GM10248 (cell line): ENCODE measurements at regions of chr4 and their contacts with region 1.

Region 1: DNA sequence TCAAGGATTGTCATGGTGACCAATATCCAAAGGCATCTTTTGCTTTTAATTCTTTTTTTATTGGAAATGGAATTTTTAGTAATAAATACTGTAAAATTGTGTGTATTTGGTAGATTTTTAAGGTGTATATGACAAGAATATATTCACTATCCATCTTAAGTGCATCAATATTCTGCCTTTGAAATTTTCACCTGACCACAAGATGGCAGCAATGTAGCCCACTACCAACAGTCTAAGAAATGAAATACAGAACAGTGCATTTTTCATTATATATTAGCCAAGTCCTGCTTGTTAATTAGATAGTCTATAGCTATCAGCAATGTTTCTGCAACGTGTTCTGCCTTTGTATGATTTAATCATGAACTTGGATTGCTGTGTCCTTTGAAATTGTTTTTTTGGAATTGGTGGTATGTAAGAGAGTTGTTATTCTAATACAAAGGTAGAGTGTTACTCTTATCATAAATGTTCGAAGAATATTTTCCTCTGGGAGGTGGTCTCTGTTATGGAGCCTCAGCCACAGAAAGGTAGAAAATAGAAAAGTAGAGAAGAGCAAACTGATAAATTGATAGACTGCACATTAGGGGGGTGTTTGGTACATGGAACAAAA is 38.2 kb downstream of the HPGDS start:
- DNase-seq: peak; percentile 15
- CTCF ChIP-seq: peak; percentile 70

Region 2: GRCh38 chr4:94160774-94161173 is 143.7 kb before region 1 on chr4:
- CTCF ChIA-PET with region 1: no interaction called
- POLR2A ChIA-PET with region 1: no interaction called
- DNase-seq: no peak
- CTCF ChIP-seq: no peak

Region 3: DNA sequence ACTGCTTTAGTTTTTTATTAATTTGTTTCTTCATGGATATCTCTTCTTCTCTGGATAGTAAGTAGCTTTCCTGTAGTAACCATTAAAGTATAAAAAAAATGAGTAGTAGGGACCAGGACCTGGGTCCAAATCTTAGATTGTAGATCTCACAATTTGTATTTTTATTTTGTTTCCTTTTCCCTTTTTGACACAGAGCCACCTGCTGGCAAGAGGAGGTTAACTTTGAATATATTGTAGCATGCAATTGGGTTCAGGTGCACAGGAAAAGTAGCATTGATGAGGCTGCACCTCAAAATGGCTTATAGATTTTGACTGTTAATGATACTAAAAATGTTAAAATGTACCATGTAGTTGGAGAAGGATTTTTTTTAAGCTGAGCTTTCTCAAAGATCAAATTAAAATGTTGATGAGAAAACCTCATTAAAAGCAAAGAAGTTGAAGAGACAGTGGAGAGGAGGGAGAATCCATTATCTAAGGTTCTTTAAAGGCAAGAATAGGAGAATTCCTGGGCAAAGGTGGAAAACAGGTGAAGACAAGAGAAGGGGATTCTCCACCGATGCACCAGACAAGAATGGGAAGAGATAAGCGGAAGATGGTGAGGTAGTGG is 86.4 kb after region 1 on chr4:
- CTCF ChIA-PET with region 1: interaction called, 13 read pairs
- POLR2A ChIA-PET with region 1: no interaction called
- DNase-seq: peak; percentile 20
- CTCF ChIP-seq: peak; percentile 52